MCF 10A (cell line): ENCODE measurements at regions of chr1 and their contacts with region 1.

Region 1: DNA sequence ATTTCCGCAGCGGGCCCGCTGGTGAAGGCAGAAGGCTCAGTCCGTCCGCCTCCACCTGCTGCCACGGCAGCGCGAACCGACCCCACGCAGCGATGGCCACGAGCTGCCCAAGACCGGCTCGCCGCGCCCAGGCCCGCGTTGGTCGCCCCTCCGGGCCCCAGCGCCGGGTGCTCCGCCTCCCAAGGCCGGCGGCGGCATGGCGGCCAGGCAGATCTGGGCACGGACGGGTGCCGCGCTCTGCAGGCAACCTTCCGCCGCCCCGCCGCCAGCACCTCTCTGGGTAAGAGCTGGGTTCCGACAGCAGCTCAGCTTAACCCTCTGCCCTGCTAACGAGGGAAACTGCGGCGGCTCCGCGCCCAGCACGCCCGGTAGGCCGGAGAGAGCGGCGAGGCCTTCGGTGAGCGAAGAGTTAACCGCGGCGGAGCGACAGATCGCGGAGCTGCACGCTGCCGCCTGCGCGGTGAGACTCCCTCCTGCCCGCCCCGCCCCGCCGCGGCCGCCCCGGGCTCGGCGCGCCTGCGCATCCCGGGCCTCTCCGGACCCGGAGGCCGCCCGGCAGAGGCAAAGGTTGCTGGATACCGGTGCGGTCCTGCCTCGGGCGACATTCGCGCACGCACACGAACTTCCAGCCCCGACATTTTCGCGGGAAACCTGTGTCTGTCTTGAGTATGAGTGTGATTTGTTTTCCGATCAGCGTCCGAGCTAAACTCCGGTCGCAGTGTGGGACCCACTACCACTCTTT is at the start of gene C1orf53:
- DNase-seq: peak; percentile 92
- H3K4me3 Mint-ChIP-seq: peak within 1 kb of the TSS; percentile 86
- H3K27ac Mint-ChIP-seq: peak within 1 kb of the TSS; percentile 93
- H3K4me1 Mint-ChIP-seq: peaks cover 26% of the 10 kb centered on the region
- H3K27me3 Mint-ChIP-seq: no peaks in the 10 kb centered on the region
- CTCF ChIP-seq: no peak
- total RNA-seq, gene C1orf53: 10.7 and 15.1 TPM in 2 replicates

Region 2: DNA sequence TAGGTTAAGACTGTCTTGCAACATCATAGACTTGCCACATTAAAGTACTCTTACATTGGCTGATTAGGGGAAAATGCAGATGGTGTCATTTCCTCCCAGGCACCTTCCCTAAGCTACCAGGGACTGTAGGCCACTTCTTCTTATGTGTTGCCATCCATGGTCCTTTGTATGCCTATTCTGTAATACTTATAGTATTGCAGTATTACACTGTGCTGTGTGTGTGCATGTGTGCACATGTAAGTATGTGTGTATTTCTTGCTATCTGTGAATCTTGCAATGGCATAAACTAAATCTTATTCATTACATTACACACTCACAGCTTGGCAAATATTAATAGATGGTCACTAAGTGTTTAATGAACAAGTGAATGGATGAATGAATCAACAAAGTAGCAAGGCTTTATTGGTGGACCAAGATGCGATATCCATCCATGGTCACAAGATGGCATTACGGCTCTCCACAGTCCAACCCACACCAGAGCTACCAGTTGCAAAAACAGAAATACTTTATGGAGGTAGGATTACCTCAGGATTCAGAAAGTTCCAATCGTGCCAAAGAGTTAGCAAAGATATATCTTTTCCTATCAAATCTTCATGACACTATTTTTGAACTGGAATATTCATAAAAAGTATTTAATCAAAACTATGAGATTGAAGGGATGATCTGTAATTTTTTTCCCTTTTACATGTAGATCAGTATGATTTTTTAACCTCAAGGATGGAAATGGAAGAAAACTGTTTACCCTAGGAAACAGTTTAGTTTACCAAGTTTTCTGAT is 287.5 kb before region 1 on chr1:
- CTCF ChIA-PET with region 1: interaction called, 21 read pairs
- POLR2A ChIA-PET with region 1: interaction called, 7 read pairs
- intact Hi-C with region 1: no loop called
- DNase-seq: peak; percentile 67
- H3K4me3 Mint-ChIP-seq: no peak overlapping the region
- H3K27ac Mint-ChIP-seq: no peak overlapping the region
- H3K4me1 Mint-ChIP-seq: no peaks in the 10 kb centered on the region
- H3K27me3 Mint-ChIP-seq: no peaks in the 10 kb centered on the region
- CTCF ChIP-seq: peak; percentile 82

Region 3: GRCh38 chr1:197775282-197776262 is 127.1 kb before region 1 on chr1 and contains the start of gene DENND1B:
- CTCF ChIA-PET with region 1: no interaction called
- POLR2A ChIA-PET with region 1: interaction called, 16 read pairs
- intact Hi-C with region 1: loop called (anchors 10 kb)
- DNase-seq: peak; percentile 84
- H3K4me3 Mint-ChIP-seq: peak within 1 kb of the TSS; percentile 67
- H3K27ac Mint-ChIP-seq: peak within 1 kb of the TSS; percentile 72
- H3K4me1 Mint-ChIP-seq: peaks cover 45% of the 10 kb centered on the region
- H3K27me3 Mint-ChIP-seq: no peaks in the 10 kb centered on the region
- CTCF ChIP-seq: no peak
- total RNA-seq, gene DENND1B: 19.2 and 20.9 TPM in 2 replicates

Region 4: GRCh38 chr1:197890936-197891335 is 11.7 kb before region 1 on chr1:
- CTCF ChIA-PET with region 1: interaction called, 7 read pairs
- POLR2A ChIA-PET with region 1: interaction called, 19 read pairs
- intact Hi-C with region 1: no loop called
- DNase-seq: no peak
- H3K4me3 Mint-ChIP-seq: no peak overlapping the region
- H3K27ac Mint-ChIP-seq: no peak overlapping the region
- H3K4me1 Mint-ChIP-seq: no peaks in the 10 kb centered on the region
- H3K27me3 Mint-ChIP-seq: no peaks in the 10 kb centered on the region
- CTCF ChIP-seq: no peak

Region 5: DNA sequence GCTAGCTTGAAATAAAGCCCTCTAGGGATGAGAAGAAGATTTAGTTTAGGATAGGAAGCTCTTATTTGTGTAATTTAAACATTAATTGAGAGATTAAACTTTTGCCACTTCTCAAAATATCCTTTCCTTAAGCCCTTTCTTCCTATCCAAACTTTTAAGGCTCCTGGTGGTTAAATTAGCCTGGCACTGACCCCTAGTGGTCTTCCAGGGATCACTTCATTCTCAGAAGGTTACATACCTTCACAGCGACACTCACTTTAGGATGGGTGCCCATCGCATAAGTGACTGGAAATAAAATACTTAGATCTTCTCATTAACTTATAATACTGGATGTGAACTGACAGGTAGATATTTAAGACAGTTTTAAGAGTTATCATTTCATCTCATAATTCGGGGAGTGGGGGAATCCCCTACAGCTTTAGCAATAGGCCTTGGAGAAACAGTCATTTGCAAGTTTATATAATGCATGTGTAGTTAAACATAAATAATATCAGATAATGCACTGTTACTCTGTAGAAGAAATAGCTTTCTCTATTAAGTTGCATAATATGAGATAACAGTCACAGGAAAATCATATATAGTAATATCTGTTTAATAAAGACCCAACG is 22.0 kb after region 1 on chr1:
- CTCF ChIA-PET with region 1: interaction called, 25 read pairs
- POLR2A ChIA-PET with region 1: interaction called, 6 read pairs
- intact Hi-C with region 1: no loop called
- DNase-seq: peak; percentile 84
- H3K4me3 Mint-ChIP-seq: no peak overlapping the region
- H3K27ac Mint-ChIP-seq: no peak overlapping the region
- H3K4me1 Mint-ChIP-seq: peaks cover 5% of the 10 kb centered on the region
- H3K27me3 Mint-ChIP-seq: no peaks in the 10 kb centered on the region
- CTCF ChIP-seq: peak; percentile 84